ENCODE measurements at regions of chr19 and their contacts with region 1.

Region 1: DNA sequence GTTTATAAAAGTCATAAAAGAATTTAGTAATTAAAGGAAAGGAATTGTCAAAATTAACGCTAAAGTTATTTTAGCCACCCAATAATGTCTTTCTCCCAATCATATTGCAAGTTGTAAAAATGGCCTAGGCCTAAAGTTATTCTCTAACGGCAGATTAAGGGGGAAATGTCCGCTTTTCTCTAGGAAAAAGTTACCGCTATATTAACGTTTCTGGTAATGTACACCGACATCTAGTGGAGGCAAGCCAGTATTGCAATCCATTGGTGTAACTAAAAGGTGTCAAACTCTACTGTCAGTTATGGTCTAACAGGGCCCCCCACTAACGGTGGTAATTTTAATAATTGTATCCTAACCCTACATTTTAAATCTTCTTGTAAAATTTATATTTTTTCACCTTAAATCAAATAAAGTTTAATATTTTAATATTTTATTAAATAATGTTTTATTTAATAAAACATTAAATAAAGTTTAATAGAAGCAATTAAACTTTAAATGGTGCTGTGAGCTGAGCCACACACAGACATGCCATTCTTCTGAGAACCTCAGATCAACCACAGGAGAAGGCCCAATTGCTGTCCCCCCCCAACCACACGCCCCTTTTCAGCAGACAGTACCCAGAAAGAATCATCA is 35.9 kb upstream of the ZSCAN5A start:
- DNase-seq: no peak
- H3K4me3 ChIP-seq: no peak overlapping the region
- H3K27ac ChIP-seq: no peak overlapping the region
- H3K4me1 ChIP-seq: peaks cover 3% of the 10 kb centered on the region
- H3K27me3 ChIP-seq: no peaks in the 10 kb centered on the region
- CTCF ChIP-seq: peak; percentile 92

Region 2: GRCh38 chr19:56066152-56067023 is 284.1 kb before region 1 on chr19:
- intact Hi-C with region 1: loop called (anchors 10 kb)
- DNase-seq: peak; percentile 61
- H3K4me3 ChIP-seq: peak overlapping the region; percentile 46
- H3K27ac ChIP-seq: no peak overlapping the region
- H3K4me1 ChIP-seq: peaks cover 9% of the 10 kb centered on the region
- H3K27me3 ChIP-seq: peaks cover 49% of the 10 kb centered on the region
- CTCF ChIP-seq: peak; percentile 95

Region 3: GRCh38 chr19:56252699-56253422 is 97.7 kb before region 1 on chr19:
- intact Hi-C with region 1: loop called (anchors 5 kb)
- DNase-seq: peak; percentile 69
- H3K4me3 ChIP-seq: no peak overlapping the region
- H3K27ac ChIP-seq: no peak overlapping the region
- H3K4me1 ChIP-seq: no peaks in the 10 kb centered on the region
- H3K27me3 ChIP-seq: no peaks in the 10 kb centered on the region
- CTCF ChIP-seq: peak; percentile 85

Measured in left ventricle myocardium inferior (tissue), 1 donor.